Heart right ventricle (tissue), 16 donors: ENCODE measurements at regions of chr7 and their contacts with region 1.

Region 1: DNA sequence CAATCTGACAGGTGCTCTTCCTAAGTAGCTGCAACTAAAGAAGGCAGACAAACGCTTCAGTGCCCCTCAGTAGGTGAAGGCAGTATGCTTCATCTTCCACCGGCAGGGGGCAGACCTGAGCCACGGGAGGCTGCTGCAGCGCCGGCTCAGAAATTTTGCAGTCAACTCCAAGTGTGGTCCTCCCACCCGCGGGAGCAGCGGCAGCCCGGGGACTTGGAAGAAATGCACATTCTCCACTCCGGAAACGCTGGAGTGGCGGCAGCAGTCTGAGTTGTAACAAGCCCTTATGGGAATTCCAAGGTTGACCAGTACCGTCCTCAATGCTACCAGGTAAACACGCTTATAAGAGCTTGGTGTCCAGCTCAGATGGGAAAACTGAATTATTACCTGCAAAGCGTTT is 3.4 kb downstream of the IGFBP3 start:
- DNase-seq: peak; percentile 84 to 85
- ATAC-seq: peak in 7 of 8 donors; percentile 25 to 58 (median 57)
- H3K4me3 ChIP-seq: peak overlapping the region in 5 of 10 donors; percentile 63 to 77 (median 67)
- H3K27ac ChIP-seq: no peak overlapping the region
- H3K4me1 ChIP-seq: peaks cover 5 to 55% (median 30%) of the 10 kb centered on the region in 9 donors
- H3K27me3 ChIP-seq: peaks cover 0 to 55% (median 0%) of the 10 kb centered on the region in 7 donors
- CTCF ChIP-seq: peak; percentile 89 to 98 (median 96)

Region 2: DNA sequence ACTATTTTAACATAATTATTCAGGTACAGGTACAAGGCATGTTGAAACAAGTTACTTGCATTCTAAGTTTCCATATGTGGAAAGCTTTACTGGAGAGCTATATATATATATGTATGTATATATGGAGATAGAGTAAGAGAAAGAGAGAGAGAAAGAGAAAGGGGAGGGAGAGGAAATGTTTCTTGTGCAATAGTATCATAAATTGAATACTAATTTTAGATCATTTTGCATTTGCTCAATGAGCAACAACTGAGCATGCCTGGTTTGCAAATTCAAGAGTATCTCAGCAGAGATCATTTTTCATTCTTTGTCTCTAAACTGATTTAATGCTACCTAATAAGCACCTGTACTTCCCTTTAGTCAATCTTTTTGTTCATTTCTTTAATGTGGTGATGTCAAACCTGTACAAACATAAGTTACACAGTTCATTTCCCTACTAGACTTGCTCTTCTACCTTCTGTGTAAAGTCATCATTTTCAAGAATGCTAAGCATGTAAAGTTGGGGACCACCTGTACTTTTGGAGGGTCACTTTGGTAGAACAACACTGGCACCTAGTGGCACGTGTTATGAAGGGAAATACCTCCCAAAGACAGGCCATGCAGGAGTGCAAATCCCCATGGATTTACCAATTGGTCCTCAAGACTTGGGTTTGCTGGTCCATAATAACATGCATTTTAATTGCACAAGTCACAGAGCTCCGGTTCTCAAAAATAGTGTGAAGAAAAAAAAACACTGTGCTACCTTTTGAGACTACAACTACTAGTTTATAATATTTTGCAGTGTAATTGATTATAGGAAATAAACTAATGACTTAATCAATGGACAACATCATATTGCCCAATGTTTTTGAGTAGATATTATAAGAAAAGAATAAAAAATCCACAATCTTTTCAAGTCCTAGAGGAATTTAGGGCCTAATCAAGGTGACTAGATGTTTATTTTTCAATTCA is 434.6 kb after region 1 on chr7:
- intact Hi-C with region 1: loop called (anchors 1 to 5 kb)
- DNase-seq: peak in 1 of 2 donors; percentile 53
- ATAC-seq: peak in 6 of 8 donors; percentile 55 to 71 (median 64)
- H3K4me3 ChIP-seq: no peak overlapping the region
- H3K27ac ChIP-seq: no peak overlapping the region
- H3K4me1 ChIP-seq: no peaks in the 10 kb centered on the region
- H3K27me3 ChIP-seq: peaks cover 0 to 6% (median 0%) of the 10 kb centered on the region in 7 donors
- CTCF ChIP-seq: peak; percentile 46 to 81 (median 66)

Region 3: GRCh38 chr7:47232751-47233412 is 1315.2 kb after region 1 on chr7:
- intact Hi-C with region 1: loop called in 2 of 10 experiments (anchors 5 kb)
- DNase-seq: no peak
- ATAC-seq: peak in 3 of 8 donors; percentile 32 to 46 (median 39)
- H3K4me3 ChIP-seq: no peak overlapping the region
- H3K27ac ChIP-seq: no peak overlapping the region
- H3K4me1 ChIP-seq: peaks cover 0 to 9% (median 0%) of the 10 kb centered on the region in 9 donors
- H3K27me3 ChIP-seq: no peaks in the 10 kb centered on the region
- CTCF ChIP-seq: peak in 8 of 9 donors; percentile 11 to 55 (median 42)

Region 4: GRCh38 chr7:47239931-47240421 is 1322.3 kb after region 1 on chr7:
- intact Hi-C with region 1: loop called in 1 of 10 experiments (anchors 10 kb)
- DNase-seq: no peak
- ATAC-seq: peak in 3 of 8 donors; percentile 10 to 57 (median 37)
- H3K4me3 ChIP-seq: no peak overlapping the region
- H3K27ac ChIP-seq: peak overlapping the region in 1 of 10 donors; percentile 46
- H3K4me1 ChIP-seq: peaks cover 0 to 24% (median 4%) of the 10 kb centered on the region in 9 donors
- H3K27me3 ChIP-seq: no peaks in the 10 kb centered on the region
- CTCF ChIP-seq: no peak

Region 5: GRCh38 chr7:47254081-47255006 is 1336.7 kb after region 1 on chr7:
- intact Hi-C with region 1: loop called in 7 of 10 experiments (anchors 2 to 10 kb)
- DNase-seq: peak; percentile 73 to 88
- ATAC-seq: peak; percentile 91 to 96 (median 92)
- H3K4me3 ChIP-seq: peak overlapping the region; percentile 32 to 80 (median 67)
- H3K27ac ChIP-seq: peak overlapping the region; percentile 81 to 96 (median 89)
- H3K4me1 ChIP-seq: peaks cover 2 to 17% (median 15%) of the 10 kb centered on the region in 9 donors
- H3K27me3 ChIP-seq: no peaks in the 10 kb centered on the region
- CTCF ChIP-seq: peak; percentile 88 to 100 (median 95)